GM12878 (cell line): ENCODE measurements at regions of chr4 and their contacts with region 1.

Region 1: DNA sequence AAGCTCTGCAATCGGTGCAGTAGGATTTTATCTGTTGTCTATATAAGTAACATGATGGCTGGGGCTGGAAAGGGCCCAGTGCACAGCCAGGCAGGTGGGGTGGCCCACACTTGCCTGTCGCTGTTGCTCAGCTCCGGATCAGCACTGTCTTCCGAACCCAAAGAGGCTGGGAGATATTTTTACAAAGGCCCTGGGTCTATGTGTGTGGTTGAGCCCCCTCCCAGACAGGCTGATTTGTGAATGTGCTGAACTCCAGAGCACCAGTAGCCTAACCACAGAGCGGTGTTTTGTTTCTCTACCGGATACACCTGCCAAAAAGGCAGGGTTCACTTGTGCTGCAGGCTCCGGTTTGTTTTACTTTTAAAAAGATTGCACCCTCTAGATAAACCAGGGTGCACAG is 33.5 kb upstream of the CHRNA9 start:
- DNase-seq: peak; percentile 85
- ATAC-seq: peak; percentile 67
- H3K4me3 ChIP-seq: peak overlapping the region; percentile 25; the same call in 1 of the 2 replicates
- H3K27ac ChIP-seq: peak overlapping the region; percentile 56
- H3K4me1 ChIP-seq: peaks cover 56% of the 10 kb centered on the region
- H3K27me3 ChIP-seq: no peaks in the 10 kb centered on the region
- CTCF ChIP-seq: no peak
- EP300 ChIP-seq: peak; percentile 65 to 90; a peak in 3 of 4 replicates
- POLR2A ChIP-seq: peak; percentile 62
- RAD21 ChIP-seq: no peak

Region 2: GRCh38 chr4:39626261-39626660 is 675.3 kb before region 1 on chr4:
- CTCF ChIA-PET with region 1: no interaction called
- POLR2A ChIA-PET with region 1: no interaction called
- RAD21 ChIA-PET with region 1: no interaction called
- SMC1A ChIA-PET with region 1: no interaction called
- in situ Hi-C with region 1: no loop called
- intact Hi-C with region 1: no loop called
- DNase-seq: peak; percentile 80
- ATAC-seq: peak; percentile 73
- H3K4me3 ChIP-seq: peak overlapping the region; percentile 75
- H3K27ac ChIP-seq: peak overlapping the region; percentile 67
- H3K4me1 ChIP-seq: peaks cover 50% of the 10 kb centered on the region
- H3K27me3 ChIP-seq: no peaks in the 10 kb centered on the region
- CTCF ChIP-seq: no peak
- EP300 ChIP-seq: peak; percentile 83 to 84; a peak in 2 of 4 replicates
- POLR2A ChIP-seq: no peak
- RAD21 ChIP-seq: peak; percentile 18; the same call in 1 of the 2 replicates

Region 3: DNA sequence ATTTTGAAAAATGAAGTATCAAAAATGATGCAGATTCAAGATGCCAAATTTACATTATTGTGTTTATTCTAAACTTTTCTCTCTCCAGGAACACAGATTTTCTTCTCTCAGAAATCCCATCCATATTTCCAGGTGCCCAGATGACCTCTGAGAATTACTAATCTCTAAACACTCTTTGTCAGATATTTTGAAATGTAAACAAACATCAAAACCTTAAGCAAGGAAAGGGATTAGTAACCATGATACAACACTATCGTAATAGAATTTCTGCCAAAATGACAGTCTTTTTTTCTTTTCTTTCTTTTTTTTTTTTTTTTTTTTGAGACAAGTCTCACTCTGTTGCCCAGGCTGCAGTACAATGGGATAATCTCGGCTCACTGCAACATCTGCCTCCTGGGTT is 400.6 kb before region 1 on chr4:
- CTCF ChIA-PET with region 1: no interaction called
- POLR2A ChIA-PET with region 1: no interaction called
- RAD21 ChIA-PET with region 1: no interaction called
- SMC1A ChIA-PET with region 1: no interaction called
- in situ Hi-C with region 1: no loop called
- intact Hi-C with region 1: no loop called
- DNase-seq: no peak
- ATAC-seq: no peak
- H3K4me3 ChIP-seq: no peak overlapping the region
- H3K27ac ChIP-seq: no peak overlapping the region
- H3K4me1 ChIP-seq: no peaks in the 10 kb centered on the region
- H3K27me3 ChIP-seq: no peaks in the 10 kb centered on the region
- CTCF ChIP-seq: no peak
- EP300 ChIP-seq: no peak
- POLR2A ChIP-seq: no peak
- RAD21 ChIP-seq: no peak

Region 4: DNA sequence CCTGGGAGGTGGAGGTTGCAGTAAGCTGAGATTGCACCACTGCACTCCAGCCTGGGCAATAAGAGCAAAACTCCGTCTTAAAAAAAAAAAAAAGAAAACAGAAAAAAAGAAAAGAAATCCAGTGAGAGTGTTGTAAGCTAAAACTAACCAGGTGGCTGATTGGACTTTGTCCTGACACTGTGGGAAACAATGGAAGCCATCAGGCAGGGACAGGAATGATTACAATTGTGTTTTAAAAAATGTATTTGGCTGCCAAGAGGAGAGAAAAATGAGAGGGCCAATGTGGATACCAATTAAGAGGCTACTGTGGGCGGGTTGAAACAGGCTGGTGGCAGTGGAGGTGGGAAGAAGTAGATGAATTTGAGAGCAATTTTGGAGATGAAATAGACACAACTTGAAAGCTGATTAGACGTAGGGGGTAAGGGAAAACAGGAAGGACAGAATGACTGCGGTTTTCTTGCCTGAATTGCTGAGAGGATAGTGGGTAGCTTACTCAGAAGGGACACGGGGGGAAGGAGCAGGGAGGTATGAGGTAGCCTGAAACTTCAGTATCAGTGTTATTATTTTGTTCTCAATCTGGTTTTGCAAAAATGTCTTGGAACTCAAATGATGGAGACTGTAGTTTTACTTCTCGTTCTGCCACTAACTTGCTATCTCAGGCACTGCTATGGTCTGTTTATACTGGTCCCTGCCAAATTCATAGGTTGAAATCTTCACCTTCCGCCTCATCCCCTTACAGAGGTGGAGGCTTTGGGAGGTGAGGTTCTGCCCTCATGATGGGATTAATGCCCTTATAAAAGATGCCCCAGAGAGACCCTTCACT is 12.0 kb before region 1 on chr4:
- CTCF ChIA-PET with region 1: interaction called, 4 read pairs
- POLR2A ChIA-PET with region 1: interaction called, 4 read pairs
- RAD21 ChIA-PET with region 1: interaction called, 4 read pairs
- SMC1A ChIA-PET with region 1: interaction called, 15 read pairs
- in situ Hi-C with region 1: no loop called
- intact Hi-C with region 1: no loop called
- DNase-seq: no peak
- ATAC-seq: peak; percentile 90
- H3K4me3 ChIP-seq: no peak overlapping the region
- H3K27ac ChIP-seq: no peak overlapping the region; the same call in 1 of the 2 replicates
- H3K4me1 ChIP-seq: peaks cover 12% of the 10 kb centered on the region
- H3K27me3 ChIP-seq: no peaks in the 10 kb centered on the region
- CTCF ChIP-seq: no peak
- EP300 ChIP-seq: no peak
- POLR2A ChIP-seq: no peak
- RAD21 ChIP-seq: 0 out of 2 replicates have a peak, but pooled peaks have one; percentile 3